Natural killer cell (primary cell): ENCODE measurements at regions of chr20 and their contacts with region 1.

Region 1: GRCh38 chr20:47272893-47273590 is 83.5 kb downstream of the ZMYND8 start:
- DNase-seq: peak in 1 of 2 donors; percentile 83
- ATAC-seq: peak; percentile 83 to 88 (median 84)
- H3K4me3 ChIP-seq: no peak overlapping the region
- H3K4me3 Mint-ChIP-seq: no peak overlapping the region
- H3K27ac ChIP-seq: no peak overlapping the region
- H3K27ac Mint-ChIP-seq: peak overlapping the region; percentile 46 to 50
- H3K4me1 ChIP-seq: no peaks in the 10 kb centered on the region
- H3K4me1 Mint-ChIP-seq: peaks cover 13 to 15% of the 10 kb centered on the region in 2 donors
- H3K27me3 ChIP-seq: no peaks in the 10 kb centered on the region
- H3K27me3 Mint-ChIP-seq: no peaks in the 10 kb centered on the region
- CTCF ChIP-seq: peak; percentile 98

Region 2: GRCh38 chr20:47181056-47181862 is 91.8 kb before region 1 on chr20:
- intact Hi-C with region 1: no loop called
- DNase-seq: peak in 1 of 2 donors; percentile 12
- ATAC-seq: peak in 1 of 3 donors; percentile 45
- H3K4me3 ChIP-seq: no peak overlapping the region
- H3K4me3 Mint-ChIP-seq: no peak overlapping the region
- H3K27ac ChIP-seq: no peak overlapping the region
- H3K27ac Mint-ChIP-seq: no peak overlapping the region
- H3K4me1 ChIP-seq: no peaks in the 10 kb centered on the region
- H3K4me1 Mint-ChIP-seq: no peaks in the 10 kb centered on the region
- H3K27me3 ChIP-seq: no peaks in the 10 kb centered on the region
- H3K27me3 Mint-ChIP-seq: peaks cover 0 to 3% of the 10 kb centered on the region in 2 donors
- CTCF ChIP-seq: no peak

Region 3: DNA sequence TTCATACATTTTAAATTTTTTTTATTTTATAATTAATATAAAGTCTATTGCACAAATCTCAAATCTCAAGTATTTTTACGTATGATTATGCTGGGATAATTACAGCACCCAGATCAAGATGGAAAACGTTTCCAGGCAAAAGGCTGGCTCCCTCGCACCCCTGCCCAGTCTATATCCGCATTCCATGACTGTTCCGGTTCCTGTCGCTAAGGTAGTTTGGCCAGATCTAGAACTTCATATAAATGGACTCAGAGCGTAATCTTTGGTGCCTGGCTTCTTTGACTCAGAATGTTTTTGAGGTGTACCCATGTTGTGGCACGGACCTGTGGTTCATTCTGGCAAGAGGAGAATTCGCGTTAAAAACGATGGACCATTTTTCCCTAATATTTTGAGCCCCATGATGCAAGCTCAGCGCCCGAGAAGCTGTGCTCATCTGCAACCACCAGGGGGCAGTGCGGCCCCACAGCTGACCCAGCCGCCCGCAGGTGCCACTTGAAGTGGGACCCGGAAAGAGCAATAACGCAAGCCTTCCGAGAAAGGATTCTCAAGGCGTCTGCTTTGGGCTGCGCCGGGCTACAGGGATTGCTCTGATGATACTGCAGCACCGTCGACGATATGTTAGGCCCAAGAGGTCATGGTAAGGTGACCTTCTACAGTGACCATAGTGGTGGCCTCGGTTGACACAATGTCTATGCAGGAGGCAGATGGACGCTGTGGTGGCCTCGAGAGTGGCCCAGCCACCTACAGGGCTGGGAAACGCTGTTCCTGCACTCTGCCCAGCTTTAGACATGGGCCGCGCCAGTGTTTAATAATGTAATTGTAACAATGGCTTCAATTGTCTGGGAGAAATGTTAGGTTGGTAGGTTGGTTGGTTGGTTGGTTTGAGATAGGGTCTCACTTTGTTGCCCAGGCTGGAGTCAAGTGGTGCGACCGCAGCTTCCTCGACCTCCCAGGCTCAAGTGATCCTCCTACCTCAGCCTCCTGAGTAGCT is 76.7 kb before region 1 on chr20:
- intact Hi-C with region 1: loop called (anchors 1 kb)
- DNase-seq: peak; percentile 31 to 82
- ATAC-seq: peak; percentile 87 to 96 (median 89)
- H3K4me3 ChIP-seq: no peak overlapping the region
- H3K4me3 Mint-ChIP-seq: no peak overlapping the region
- H3K27ac ChIP-seq: no peak overlapping the region
- H3K27ac Mint-ChIP-seq: no peak overlapping the region
- H3K4me1 ChIP-seq: peaks cover 4% of the 10 kb centered on the region
- H3K4me1 Mint-ChIP-seq: peaks cover 11% of the 10 kb centered on the region in 2 donors
- H3K27me3 ChIP-seq: no peaks in the 10 kb centered on the region
- H3K27me3 Mint-ChIP-seq: peaks cover 0 to 4% of the 10 kb centered on the region in 2 donors
- CTCF ChIP-seq: peak; percentile 95

Region 4: GRCh38 chr20:47231382-47232039 is 41.5 kb before region 1 on chr20:
- intact Hi-C with region 1: no loop called
- DNase-seq: no peak
- ATAC-seq: no peak
- H3K4me3 ChIP-seq: no peak overlapping the region
- H3K4me3 Mint-ChIP-seq: no peak overlapping the region
- H3K27ac ChIP-seq: no peak overlapping the region
- H3K27ac Mint-ChIP-seq: peak overlapping the region in 1 of 2 donors; percentile 50
- H3K4me1 ChIP-seq: no peaks in the 10 kb centered on the region
- H3K4me1 Mint-ChIP-seq: peaks cover 0 to 15% of the 10 kb centered on the region in 2 donors
- H3K27me3 ChIP-seq: no peaks in the 10 kb centered on the region
- H3K27me3 Mint-ChIP-seq: no peaks in the 10 kb centered on the region
- CTCF ChIP-seq: no peak